Mammary epithelial cell (primary cell): ENCODE measurements at regions of chr2 and their contacts with region 1.

Region 1: DNA sequence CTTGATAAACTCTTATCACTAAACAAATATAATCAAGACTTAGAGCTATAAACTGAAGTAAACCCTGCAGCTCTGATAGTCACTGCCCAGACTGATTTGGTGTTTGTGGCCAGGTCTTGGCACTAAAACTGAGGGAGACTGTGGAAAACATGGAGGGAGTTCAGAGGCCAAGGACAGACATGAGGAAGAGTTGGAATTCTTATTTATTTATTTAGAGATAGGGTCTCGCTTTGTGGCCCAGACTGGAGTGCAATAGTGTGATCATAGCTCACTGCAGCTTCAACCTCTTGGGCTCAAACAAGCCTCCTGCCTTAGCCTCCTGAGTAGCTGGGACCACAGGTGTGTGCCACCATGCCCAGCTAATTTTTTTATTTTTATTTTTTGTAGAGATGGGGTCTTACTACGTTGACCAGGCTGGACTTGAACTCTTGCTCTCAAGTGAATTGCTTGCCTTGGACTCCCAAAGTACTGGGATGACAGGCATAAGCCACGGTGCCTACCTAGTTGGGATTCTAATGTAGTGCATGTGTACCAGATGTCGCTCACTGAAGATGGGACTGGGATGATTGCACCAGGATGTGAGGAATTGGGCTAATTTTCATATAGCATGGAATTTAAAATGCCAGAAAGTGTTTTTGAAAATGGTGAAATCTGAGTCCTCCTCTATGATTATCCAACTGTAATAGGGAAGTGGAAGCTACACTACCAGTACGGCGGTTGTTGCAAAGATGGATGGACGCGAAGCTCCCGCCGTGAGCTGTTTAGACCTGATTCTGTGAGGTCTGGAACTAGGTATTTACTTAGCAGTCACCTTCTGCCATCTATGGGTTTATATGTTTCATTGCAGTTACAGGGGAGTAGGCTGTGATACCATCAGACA is 52.7 kb upstream of the CTLA4 start:
- DNase-seq: peak; percentile 62
- H3K4me3 ChIP-seq: no peak overlapping the region
- H3K27ac ChIP-seq: no peak overlapping the region
- H3K4me1 ChIP-seq: peaks cover 12% of the 10 kb centered on the region
- H3K27me3 ChIP-seq: no peaks in the 10 kb centered on the region
- CTCF ChIP-seq: peak; percentile 80 to 83

Region 2: DNA sequence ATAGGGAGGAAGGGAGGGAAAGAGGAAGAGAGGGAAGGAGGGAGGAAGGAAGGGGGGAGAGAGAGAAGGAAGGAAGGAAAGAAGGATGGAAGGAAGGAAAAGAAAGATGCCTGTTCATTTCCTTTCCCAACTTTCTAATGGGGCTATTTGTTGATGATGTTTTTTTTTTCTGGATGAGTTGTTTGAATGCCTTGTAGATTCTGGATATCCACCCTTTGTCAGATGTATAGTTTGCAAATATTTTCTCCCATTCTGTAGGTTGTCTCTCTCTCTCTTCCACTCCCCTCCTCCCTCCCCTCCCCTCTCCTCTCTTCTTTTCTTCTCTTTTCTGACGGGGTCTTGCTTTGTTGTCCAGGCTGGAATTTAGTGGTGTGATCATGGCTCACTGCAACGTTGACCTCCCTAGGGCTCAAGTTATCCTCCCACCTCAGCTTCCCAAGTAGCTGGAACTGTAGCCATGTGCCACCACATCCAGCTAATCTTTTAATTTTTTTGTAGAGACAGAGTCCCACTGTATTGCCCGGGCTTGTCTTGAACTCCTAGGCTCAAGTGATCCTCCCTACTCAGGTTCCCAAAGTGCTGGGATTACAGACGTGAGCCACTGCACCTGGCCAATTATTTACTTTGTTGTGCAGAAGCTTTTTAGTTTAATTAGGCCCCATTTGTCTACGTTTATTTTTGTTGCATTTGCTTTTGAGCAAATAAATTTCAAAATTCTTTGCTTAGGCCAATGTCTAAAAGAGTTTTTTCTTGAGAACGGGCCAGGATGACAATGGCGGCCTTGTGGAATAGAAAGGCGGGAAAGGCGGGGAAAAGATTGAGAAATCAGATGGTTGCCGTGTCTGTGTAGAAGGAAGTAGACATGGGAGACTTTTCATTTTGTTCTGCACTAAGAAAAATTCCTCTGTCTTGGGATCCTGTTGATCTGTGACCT is 1237.4 kb before region 1 on chr2:
- CTCF ChIA-PET with region 1: no interaction called
- dilution Hi-C with region 1: no loop called
- in situ Hi-C with region 1: no loop called
- intact Hi-C with region 1: loop called (anchors 5 kb)
- DNase-seq: no peak
- H3K4me3 ChIP-seq: no peak overlapping the region
- H3K27ac ChIP-seq: no peak overlapping the region
- H3K4me1 ChIP-seq: no peaks in the 10 kb centered on the region
- H3K27me3 ChIP-seq: no peaks in the 10 kb centered on the region
- CTCF ChIP-seq: no peak

Region 3: DNA sequence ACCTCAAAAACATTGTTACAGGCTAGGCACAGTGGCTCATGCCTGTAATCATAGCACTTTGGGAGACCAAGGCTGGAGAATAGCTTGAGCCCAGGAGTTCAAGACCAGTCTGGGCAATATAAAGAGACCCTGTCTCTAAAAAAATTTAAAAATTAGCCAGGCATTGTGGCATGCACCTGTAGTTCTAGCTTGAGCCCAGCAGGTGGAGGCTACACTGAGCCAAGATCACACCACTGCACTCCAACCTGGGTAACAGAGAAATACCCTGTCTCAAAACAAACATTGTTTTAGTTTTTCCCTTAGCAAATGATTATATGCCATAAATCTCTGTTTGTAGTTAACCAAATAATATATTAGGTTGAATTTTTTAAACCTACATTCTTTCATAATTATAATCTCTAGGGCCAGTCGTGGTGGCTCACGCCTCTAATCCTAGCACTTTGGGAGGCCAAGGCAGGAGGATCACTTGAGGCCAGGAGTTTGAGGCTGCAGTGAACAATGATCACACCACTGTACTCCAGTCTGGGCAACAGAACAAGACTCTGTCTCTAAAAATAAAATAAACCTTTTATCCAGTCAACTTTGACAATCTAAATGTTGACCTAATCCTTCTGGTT is 589.4 kb before region 1 on chr2:
- CTCF ChIA-PET with region 1: no interaction called
- dilution Hi-C with region 1: no loop called
- in situ Hi-C with region 1: loop called in 1 of 2 experiments (anchors 25 kb)
- intact Hi-C with region 1: loop called (anchors 1 kb)
- DNase-seq: peak; percentile 5
- H3K4me3 ChIP-seq: no peak overlapping the region
- H3K27ac ChIP-seq: no peak overlapping the region
- H3K4me1 ChIP-seq: no peaks in the 10 kb centered on the region
- H3K27me3 ChIP-seq: no peaks in the 10 kb centered on the region
- CTCF ChIP-seq: peak; percentile 62 to 72

Region 4: GRCh38 chr2:203376173-203376572 is 438.7 kb before region 1 on chr2:
- CTCF ChIA-PET with region 1: no interaction called
- dilution Hi-C with region 1: no loop called
- in situ Hi-C with region 1: no loop called
- intact Hi-C with region 1: no loop called
- DNase-seq: no peak
- H3K4me3 ChIP-seq: no peak overlapping the region
- H3K27ac ChIP-seq: no peak overlapping the region
- H3K4me1 ChIP-seq: no peaks in the 10 kb centered on the region
- H3K27me3 ChIP-seq: no peaks in the 10 kb centered on the region
- CTCF ChIP-seq: peak in 1 of 2 donors; percentile 8

Region 5: GRCh38 chr2:203484266-203485112 is 330.4 kb before region 1 on chr2:
- CTCF ChIA-PET with region 1: interaction called, 3 read pairs
- dilution Hi-C with region 1: no loop called
- in situ Hi-C with region 1: loop called (anchors 25 kb)
- intact Hi-C with region 1: loop called (anchors 1 kb)
- DNase-seq: peak; percentile 29
- H3K4me3 ChIP-seq: no peak overlapping the region
- H3K27ac ChIP-seq: no peak overlapping the region
- H3K4me1 ChIP-seq: no peaks in the 10 kb centered on the region
- H3K27me3 ChIP-seq: no peaks in the 10 kb centered on the region
- CTCF ChIP-seq: peak; percentile 59 to 71

Region 6: GRCh38 chr2:203656522-203657287 is 158.2 kb before region 1 on chr2:
- CTCF ChIA-PET with region 1: no interaction called
- dilution Hi-C with region 1: no loop called
- in situ Hi-C with region 1: no loop called
- intact Hi-C with region 1: loop called (anchors 1 kb)
- DNase-seq: peak; percentile 90
- H3K4me3 ChIP-seq: no peak overlapping the region
- H3K27ac ChIP-seq: peak overlapping the region; percentile 60
- H3K4me1 ChIP-seq: peaks cover 22% of the 10 kb centered on the region
- H3K27me3 ChIP-seq: no peaks in the 10 kb centered on the region
- CTCF ChIP-seq: no peak

Region 7: GRCh38 chr2:203751685-203752271 is 63.1 kb before region 1 on chr2:
- CTCF ChIA-PET with region 1: no interaction called
- dilution Hi-C with region 1: no loop called
- in situ Hi-C with region 1: no loop called
- intact Hi-C with region 1: no loop called
- DNase-seq: no peak
- H3K4me3 ChIP-seq: no peak overlapping the region
- H3K27ac ChIP-seq: no peak overlapping the region
- H3K4me1 ChIP-seq: no peaks in the 10 kb centered on the region
- H3K27me3 ChIP-seq: no peaks in the 10 kb centered on the region
- CTCF ChIP-seq: no peak

Region 8: GRCh38 chr2:203893401-203893800 is 78.5 kb after region 1 on chr2:
- CTCF ChIA-PET with region 1: no interaction called
- dilution Hi-C with region 1: no loop called
- in situ Hi-C with region 1: no loop called
- intact Hi-C with region 1: no loop called
- DNase-seq: peak; percentile 40
- H3K4me3 ChIP-seq: no peak overlapping the region
- H3K27ac ChIP-seq: no peak overlapping the region
- H3K4me1 ChIP-seq: peaks cover 15% of the 10 kb centered on the region
- H3K27me3 ChIP-seq: no peaks in the 10 kb centered on the region
- CTCF ChIP-seq: no peak

Region 9: GRCh38 chr2:203909261-203909967 is 94.5 kb after region 1 on chr2:
- CTCF ChIA-PET with region 1: interaction called, 5 read pairs
- dilution Hi-C with region 1: no loop called
- in situ Hi-C with region 1: no loop called
- intact Hi-C with region 1: loop called (anchors 2 kb)
- DNase-seq: peak; percentile 21
- H3K4me3 ChIP-seq: peak overlapping the region in 2 of 3 experiments; percentile 12 to 22
- H3K27ac ChIP-seq: no peak overlapping the region
- H3K4me1 ChIP-seq: no peaks in the 10 kb centered on the region
- H3K27me3 ChIP-seq: no peaks in the 10 kb centered on the region
- CTCF ChIP-seq: peak; percentile 77 to 81